Endothelial cell of umbilical vein (primary cell): ENCODE measurements at regions of chr6 and their contacts with region 1.

Region 1: DNA sequence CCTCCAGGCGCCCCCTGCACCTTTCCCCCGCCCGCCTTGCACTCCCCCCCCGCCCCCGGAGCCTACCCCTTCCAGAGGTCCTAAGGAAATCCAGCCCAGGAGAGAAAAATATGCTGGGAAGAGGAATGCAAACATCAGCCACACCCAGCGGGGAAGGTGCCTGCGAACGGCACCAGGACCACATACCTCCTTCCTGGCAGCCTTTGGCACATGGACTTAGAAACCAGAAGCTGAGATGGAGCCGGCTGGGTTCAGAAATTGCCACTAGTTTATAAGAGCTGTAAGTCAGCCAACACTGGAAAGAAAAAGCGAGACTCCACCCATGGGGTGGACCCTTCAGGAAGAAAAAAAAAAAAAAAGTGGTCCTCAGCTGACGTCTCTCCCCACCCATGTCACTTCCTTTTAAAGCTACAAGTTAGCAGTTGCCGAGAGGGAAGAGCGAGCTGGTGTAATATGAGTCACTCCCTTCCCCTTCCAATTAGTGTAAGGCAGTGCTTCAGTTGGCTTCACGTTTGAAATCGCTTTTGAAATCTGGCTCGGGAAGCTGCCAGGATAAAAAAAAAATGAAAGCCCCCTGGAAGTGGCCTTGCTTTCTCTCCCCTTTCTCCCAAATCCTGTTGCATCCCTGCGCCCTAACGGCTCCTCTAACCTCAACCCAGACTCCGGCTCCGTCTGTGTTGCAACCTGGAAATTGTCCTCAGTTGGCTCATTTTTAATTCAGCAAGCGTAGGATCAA is at the start of gene AGPAT4:
- DNase-seq: peak; percentile 98
- H3K4me3 ChIP-seq: peak within 1 kb of the TSS; percentile 71 to 82 (median 72)
- H3K27ac ChIP-seq: peak within 1 kb of the TSS; percentile 87
- H3K4me1 ChIP-seq: peaks cover 16% of the 10 kb centered on the region
- H3K27me3 ChIP-seq: no peaks in the 10 kb centered on the region
- CTCF ChIP-seq: no peak
- POLR2A ChIP-seq: peak; percentile 63
- total RNA-seq, gene AGPAT4: 15.2 and 15.4 TPM in 2 replicates

Region 2: GRCh38 chr6:160992061-160992979 is 281.6 kb before region 1 on chr6:
- CTCF ChIA-PET with region 1: interaction called, 3 read pairs
- POLR2A ChIA-PET with region 1: interaction called, 3 read pairs
- dilution Hi-C with region 1: no loop called
- intact Hi-C with region 1: loop called (anchors 1 kb)
- DNase-seq: peak; percentile 78
- H3K4me3 ChIP-seq: peak overlapping the region; percentile 80 to 88 (median 80)
- H3K27ac ChIP-seq: peak overlapping the region; percentile 49
- H3K4me1 ChIP-seq: peaks cover 14% of the 10 kb centered on the region
- H3K27me3 ChIP-seq: no peaks in the 10 kb centered on the region
- CTCF ChIP-seq: peak; percentile 43 to 66
- POLR2A ChIP-seq: no peak

Region 3: DNA sequence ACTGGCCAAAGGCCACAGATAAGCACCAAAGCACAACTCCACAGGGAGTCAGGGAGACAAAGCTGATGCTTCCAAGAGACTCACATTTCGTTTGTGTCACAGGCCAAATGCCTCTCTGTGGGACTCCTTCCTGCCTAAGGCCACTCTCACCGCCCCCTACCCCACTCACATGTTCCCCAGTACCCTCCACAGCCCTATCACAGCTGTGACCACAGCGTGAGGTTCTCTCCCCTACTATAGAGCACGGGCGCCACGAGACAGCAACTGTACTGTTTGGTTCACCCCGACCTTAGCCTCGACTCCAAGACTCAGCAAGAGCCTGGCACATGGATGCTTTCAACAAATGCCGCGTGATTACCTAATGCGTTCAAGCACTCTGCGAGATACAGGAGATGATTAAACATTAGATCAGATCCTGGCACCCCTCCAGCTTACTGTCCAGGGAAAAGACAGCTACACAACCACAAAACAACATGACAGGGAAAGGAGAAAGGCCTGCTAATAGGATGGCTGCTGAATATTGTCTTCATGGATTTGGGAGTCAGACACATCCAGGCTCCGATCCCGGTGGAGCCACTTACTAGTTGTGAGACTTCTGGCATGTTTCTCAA is 105.5 kb before region 1 on chr6:
- CTCF ChIA-PET with region 1: no interaction called
- POLR2A ChIA-PET with region 1: no interaction called
- dilution Hi-C with region 1: no loop called
- intact Hi-C with region 1: loop called (anchors 1 kb)
- DNase-seq: peak; percentile 84
- H3K4me3 ChIP-seq: no peak overlapping the region
- H3K27ac ChIP-seq: peak overlapping the region; percentile 43
- H3K4me1 ChIP-seq: peaks cover 15% of the 10 kb centered on the region
- H3K27me3 ChIP-seq: no peaks in the 10 kb centered on the region
- CTCF ChIP-seq: no peak
- POLR2A ChIP-seq: no peak

Region 4: DNA sequence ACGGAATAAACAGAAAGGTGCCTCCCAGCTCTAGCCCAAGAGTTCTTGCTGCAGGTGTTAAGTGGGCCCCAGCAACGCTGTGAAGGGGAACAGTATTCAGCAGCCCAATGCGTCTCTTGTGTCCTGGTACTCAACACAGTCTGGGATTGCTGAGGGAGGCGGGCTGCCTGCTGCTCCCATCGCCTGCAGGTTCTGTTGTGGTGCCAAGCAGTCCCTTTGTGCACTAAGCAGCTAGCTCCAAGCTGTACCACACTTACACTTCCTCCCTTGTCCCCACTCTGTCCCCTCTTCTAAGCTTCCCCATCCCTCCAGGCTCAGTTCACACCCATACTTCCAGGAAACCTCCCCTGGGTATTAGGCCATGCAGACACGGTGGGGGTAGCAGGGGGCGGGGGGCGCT is 92.8 kb before region 1 on chr6:
- CTCF ChIA-PET with region 1: no interaction called
- POLR2A ChIA-PET with region 1: no interaction called
- dilution Hi-C with region 1: no loop called
- intact Hi-C with region 1: no loop called
- DNase-seq: no peak
- H3K4me3 ChIP-seq: no peak overlapping the region
- H3K27ac ChIP-seq: no peak overlapping the region
- H3K4me1 ChIP-seq: no peaks in the 10 kb centered on the region
- H3K27me3 ChIP-seq: no peaks in the 10 kb centered on the region
- CTCF ChIP-seq: no peak
- POLR2A ChIP-seq: no peak

Region 5: DNA sequence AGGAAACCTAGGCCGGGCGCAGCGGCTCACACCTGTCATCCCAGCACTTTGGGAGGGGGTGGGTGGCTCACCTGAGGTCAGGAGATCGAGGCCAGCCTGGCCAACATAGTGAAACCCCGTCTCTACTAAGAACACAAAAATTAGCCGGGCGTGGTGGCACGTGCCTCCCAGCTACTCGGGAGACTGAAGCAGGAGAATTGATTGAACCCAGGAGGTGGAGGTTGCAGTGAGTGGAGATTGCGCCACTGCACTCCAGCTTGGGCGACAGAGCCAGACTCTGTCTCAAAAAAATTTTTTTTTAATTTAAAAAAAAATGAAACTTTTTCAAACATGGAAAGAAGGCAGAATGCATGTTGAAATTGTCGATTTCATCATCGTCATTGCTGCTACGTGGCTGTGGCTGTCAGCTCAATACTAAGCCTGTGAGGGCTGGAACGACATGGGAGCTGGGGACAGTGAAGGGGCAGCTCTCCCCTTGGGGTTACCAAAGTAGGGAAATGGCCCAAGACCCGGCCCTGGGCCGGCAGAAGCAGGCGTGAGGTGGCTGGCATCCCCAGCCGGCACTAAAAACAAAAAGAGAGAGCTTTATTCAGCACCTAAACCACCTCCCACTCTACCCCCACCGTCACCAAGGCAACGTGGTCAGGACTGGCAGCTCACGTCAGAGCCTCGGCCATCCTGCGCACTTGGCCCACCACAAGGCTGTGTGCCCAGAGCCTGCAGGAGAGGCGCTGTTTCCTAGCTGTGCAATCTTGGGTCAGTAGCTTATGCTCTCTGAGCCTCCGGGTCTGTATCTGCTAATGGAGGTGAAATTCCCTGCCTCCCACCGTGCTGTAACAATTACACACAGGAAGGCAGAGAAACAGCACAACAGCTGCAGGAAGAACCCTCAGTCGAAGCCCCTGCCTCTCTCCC is 30.9 kb before region 1 on chr6:
- CTCF ChIA-PET with region 1: no interaction called
- POLR2A ChIA-PET with region 1: no interaction called
- dilution Hi-C with region 1: no loop called
- intact Hi-C with region 1: no loop called
- DNase-seq: no peak
- H3K4me3 ChIP-seq: no peak overlapping the region
- H3K27ac ChIP-seq: no peak overlapping the region
- H3K4me1 ChIP-seq: no peaks in the 10 kb centered on the region
- H3K27me3 ChIP-seq: no peaks in the 10 kb centered on the region
- CTCF ChIP-seq: no peak
- POLR2A ChIP-seq: no peak

Region 6: GRCh38 chr6:161257793-161258457 is 16.0 kb before region 1 on chr6:
- CTCF ChIA-PET with region 1: interaction called, 4 read pairs
- POLR2A ChIA-PET with region 1: interaction called, 3 read pairs
- dilution Hi-C with region 1: no loop called
- intact Hi-C with region 1: loop called (anchors 1 kb)
- DNase-seq: peak; percentile 95
- H3K4me3 ChIP-seq: peak overlapping the region in 1 of 3 experiments; percentile 32
- H3K27ac ChIP-seq: peak overlapping the region; percentile 69
- H3K4me1 ChIP-seq: peaks cover 16% of the 10 kb centered on the region
- H3K27me3 ChIP-seq: no peaks in the 10 kb centered on the region
- CTCF ChIP-seq: no peak
- POLR2A ChIP-seq: no peak

Region 7: GRCh38 chr6:161284653-161285052 is 10.7 kb after region 1 on chr6:
- CTCF ChIA-PET with region 1: no interaction called
- POLR2A ChIA-PET with region 1: no interaction called
- dilution Hi-C with region 1: no loop called
- intact Hi-C with region 1: no loop called
- DNase-seq: no peak
- H3K4me3 ChIP-seq: no peak overlapping the region
- H3K27ac ChIP-seq: no peak overlapping the region
- H3K4me1 ChIP-seq: no peaks in the 10 kb centered on the region
- H3K27me3 ChIP-seq: peaks cover 6 to 8% of the 10 kb centered on the region in 2 experiments
- CTCF ChIP-seq: no peak
- POLR2A ChIP-seq: no peak

Region 8: GRCh38 chr6:161439093-161439492 is 165.2 kb after region 1 on chr6:
- CTCF ChIA-PET with region 1: no interaction called
- POLR2A ChIA-PET with region 1: no interaction called
- dilution Hi-C with region 1: no loop called
- intact Hi-C with region 1: no loop called
- DNase-seq: peak; percentile 85
- H3K4me3 ChIP-seq: no peak overlapping the region
- H3K27ac ChIP-seq: no peak overlapping the region
- H3K4me1 ChIP-seq: peaks cover 2% of the 10 kb centered on the region
- H3K27me3 ChIP-seq: no peaks in the 10 kb centered on the region
- CTCF ChIP-seq: no peak
- POLR2A ChIP-seq: no peak